ENCODE measurements at regions of chr11 and their contacts with region 1.

Region 1: DNA sequence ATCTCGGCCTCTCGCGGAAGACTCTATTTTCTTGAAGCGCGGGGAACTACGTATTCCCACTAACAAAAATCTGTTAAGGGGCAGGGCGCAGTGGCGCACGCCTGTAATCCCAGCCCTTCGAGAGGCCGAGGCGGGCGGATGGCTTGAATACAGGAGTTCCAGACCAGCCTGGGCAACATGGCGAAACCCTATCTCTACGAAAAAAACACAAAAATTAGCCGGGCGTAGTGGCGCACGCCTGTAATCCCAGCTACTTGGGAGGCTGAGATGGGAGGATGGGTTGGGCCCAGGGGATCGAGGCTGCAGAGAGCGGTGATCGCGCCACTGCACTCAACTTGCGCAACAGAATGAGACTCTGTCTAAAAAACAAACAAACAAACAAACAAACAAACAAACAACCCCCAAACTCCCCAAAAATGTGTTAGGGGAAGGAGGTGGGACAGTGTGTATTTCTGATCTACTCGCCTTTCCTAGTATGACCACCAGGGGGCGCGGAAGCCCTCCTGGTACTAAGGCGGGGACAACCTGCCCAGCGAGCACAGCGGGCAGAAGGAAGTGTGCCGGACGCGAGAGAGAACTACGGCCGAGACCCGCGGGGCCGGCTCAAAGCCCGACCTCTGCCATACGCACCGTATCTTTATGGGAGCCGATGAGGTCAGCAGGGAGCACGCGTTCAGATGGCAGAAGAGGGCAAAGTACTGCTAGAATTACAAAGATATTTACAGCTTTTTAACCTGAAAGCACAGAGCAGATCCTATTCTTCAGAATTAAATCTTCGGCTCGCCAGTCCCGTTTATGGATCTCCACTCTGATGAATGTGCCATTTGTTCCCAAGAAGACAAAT is 1.3 kb upstream of the STX3 start:
- DNase-seq: peak; percentile 65 to 84 (median 75)
- ATAC-seq: peak; percentile 80
- H3K4me3 ChIP-seq: peak overlapping the region; percentile 91
- H3K4me3 Mint-ChIP-seq: peak overlapping the region; percentile 90 to 98 (median 95)
- H3K27ac ChIP-seq: peak overlapping the region; percentile 61
- H3K27ac Mint-ChIP-seq: peak overlapping the region; percentile 32 to 88 (median 71)
- H3K4me1 ChIP-seq: peaks cover 8 to 12% of the 10 kb centered on the region in 2 donors
- H3K4me1 Mint-ChIP-seq: peaks cover 11 to 35% (median 23%) of the 10 kb centered on the region in 7 donors
- H3K27me3 ChIP-seq: no peaks in the 10 kb centered on the region
- H3K27me3 Mint-ChIP-seq: peaks cover 6 to 15% (median 10%) of the 10 kb centered on the region in 5 donors

Region 2: GRCh38 chr11:59534676-59535075 is 219.2 kb before region 1 on chr11:
- CTCF ChIA-PET with region 1: no interaction called
- POLR2A ChIA-PET with region 1: no interaction called
- intact Hi-C with region 1: loop called (anchors 1 to 5 kb)
- DNase-seq: no peak
- ATAC-seq: no peak
- H3K4me3 ChIP-seq: no peak overlapping the region
- H3K4me3 Mint-ChIP-seq: no peak overlapping the region
- H3K27ac ChIP-seq: no peak overlapping the region
- H3K27ac Mint-ChIP-seq: no peak overlapping the region
- H3K4me1 ChIP-seq: no peaks in the 10 kb centered on the region
- H3K4me1 Mint-ChIP-seq: peaks cover 9 to 14% (median 12%) of the 10 kb centered on the region in 7 donors
- H3K27me3 ChIP-seq: no peaks in the 10 kb centered on the region
- H3K27me3 Mint-ChIP-seq: peaks cover 0 to 9% (median 0%) of the 10 kb centered on the region in 5 donors

Region 3: DNA sequence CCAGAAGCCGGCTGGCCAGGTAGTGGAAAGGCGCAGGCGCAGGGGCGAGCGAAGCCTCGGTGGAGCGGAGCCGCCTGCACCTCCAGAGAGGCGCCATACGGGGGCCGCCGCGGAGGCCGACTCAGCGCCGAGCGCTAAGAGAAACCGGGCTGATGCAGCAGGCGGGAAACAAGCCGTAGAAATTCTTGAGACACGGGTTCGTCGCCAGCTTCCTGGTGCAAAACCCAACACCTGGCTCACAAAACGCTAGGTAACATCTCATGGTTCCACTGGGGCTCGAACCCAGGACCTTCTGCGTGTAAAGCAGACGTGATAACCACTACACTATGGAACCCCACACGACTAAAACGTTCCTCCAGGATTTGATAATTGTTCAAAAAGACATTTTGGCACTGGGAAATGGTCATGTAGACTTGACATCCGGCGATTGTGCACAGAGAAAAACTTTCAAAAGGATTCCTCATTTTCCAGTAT is 203.5 kb before region 1 on chr11:
- CTCF ChIA-PET with region 1: no interaction called
- POLR2A ChIA-PET with region 1: no interaction called
- intact Hi-C with region 1: loop called (anchors 1 to 2 kb)
- DNase-seq: peak; percentile 67 to 95 (median 89)
- ATAC-seq: peak; percentile 92
- H3K4me3 ChIP-seq: peak overlapping the region; percentile 59
- H3K4me3 Mint-ChIP-seq: peak overlapping the region; percentile 70 to 98 (median 92)
- H3K27ac ChIP-seq: peak overlapping the region; percentile 66
- H3K27ac Mint-ChIP-seq: peak overlapping the region; percentile 89 to 100 (median 98)
- H3K4me1 ChIP-seq: peaks cover under 1 to 4% of the 10 kb centered on the region in 2 donors
- H3K4me1 Mint-ChIP-seq: peaks cover 0 to 40% (median 32%) of the 10 kb centered on the region in 7 donors
- H3K27me3 ChIP-seq: no peaks in the 10 kb centered on the region
- H3K27me3 Mint-ChIP-seq: peaks cover 0 to 28% (median 0%) of the 10 kb centered on the region in 5 donors

Region 4: GRCh38 chr11:59767225-59767611 is 13.3 kb after region 1 on chr11:
- CTCF ChIA-PET with region 1: interaction called, 24 read pairs
- POLR2A ChIA-PET with region 1: interaction called, 11 read pairs
- intact Hi-C with region 1: loop called (anchors 1 kb)
- DNase-seq: peak in 6 of 9 donors; percentile 10 to 55 (median 40)
- ATAC-seq: peak; percentile 80
- H3K4me3 ChIP-seq: peak overlapping the region; percentile 32
- H3K4me3 Mint-ChIP-seq: peak overlapping the region in 5 of 10 donors; percentile 27 to 67 (median 58)
- H3K27ac ChIP-seq: no peak overlapping the region
- H3K27ac Mint-ChIP-seq: peak overlapping the region in 3 of 9 donors; percentile 24 to 81 (median 49)
- H3K4me1 ChIP-seq: peaks cover 31 to 45% of the 10 kb centered on the region in 2 donors
- H3K4me1 Mint-ChIP-seq: peaks cover 7 to 33% (median 27%) of the 10 kb centered on the region in 7 donors
- H3K27me3 ChIP-seq: no peaks in the 10 kb centered on the region
- H3K27me3 Mint-ChIP-seq: peaks cover 0 to 4% (median 0%) of the 10 kb centered on the region in 5 donors

Region 5: DNA sequence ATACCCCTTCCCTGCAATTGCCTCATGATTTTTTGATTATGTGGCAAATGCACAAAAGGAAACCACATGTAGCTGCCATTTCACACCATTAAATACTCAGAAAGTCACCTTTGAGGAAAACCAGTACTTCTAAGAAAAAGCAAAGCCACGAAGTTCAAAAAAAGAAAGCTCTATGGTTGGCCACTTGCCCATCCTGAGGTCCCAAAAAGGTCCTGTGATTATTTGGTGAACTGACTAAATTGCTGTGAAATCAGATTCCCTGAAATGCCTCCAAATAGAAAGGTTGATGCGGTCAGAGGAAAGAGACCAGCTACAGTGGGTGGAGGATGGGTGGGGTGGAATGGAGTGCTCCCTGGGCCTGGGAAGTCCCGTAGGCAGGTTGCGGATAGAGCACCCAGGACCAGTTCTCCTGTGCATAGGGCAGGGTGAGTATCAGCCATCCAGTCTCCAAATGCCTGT is 29.8 kb after region 1 on chr11:
- CTCF ChIA-PET with region 1: no interaction called
- POLR2A ChIA-PET with region 1: no interaction called
- intact Hi-C with region 1: no loop called
- DNase-seq: no peak
- ATAC-seq: no peak
- H3K4me3 ChIP-seq: no peak overlapping the region
- H3K4me3 Mint-ChIP-seq: peak overlapping the region in 1 of 10 donors; percentile 18
- H3K27ac ChIP-seq: no peak overlapping the region
- H3K27ac Mint-ChIP-seq: peak overlapping the region in 1 of 9 donors; percentile 69
- H3K4me1 ChIP-seq: peaks cover 0 to 14% of the 10 kb centered on the region in 2 donors
- H3K4me1 Mint-ChIP-seq: peaks cover 0 to 69% (median 5%) of the 10 kb centered on the region in 7 donors
- H3K27me3 ChIP-seq: no peaks in the 10 kb centered on the region
- H3K27me3 Mint-ChIP-seq: no peaks in the 10 kb centered on the region

Region 6: GRCh38 chr11:59810189-59810910 is 56.5 kb after region 1 on chr11 and contains the start of gene MRPL16:
- CTCF ChIA-PET with region 1: interaction called, 16 read pairs
- POLR2A ChIA-PET with region 1: interaction called, 24 read pairs
- intact Hi-C with region 1: loop called (anchors 1 to 2 kb)
- DNase-seq: peak; percentile 74 to 89 (median 83)
- ATAC-seq: peak; percentile 100
- H3K4me3 ChIP-seq: peak within 1 kb of the TSS; percentile 83
- H3K4me3 Mint-ChIP-seq: peak within 1 kb of the TSS; percentile 88 to 95 (median 92)
- H3K27ac ChIP-seq: peak within 1 kb of the TSS; percentile 75
- H3K27ac Mint-ChIP-seq: peak within 1 kb of the TSS; percentile 86 to 94 (median 92)
- H3K4me1 ChIP-seq: peaks cover 4 to 9% of the 10 kb centered on the region in 2 donors
- H3K4me1 Mint-ChIP-seq: peaks cover 6 to 35% (median 29%) of the 10 kb centered on the region in 7 donors
- H3K27me3 ChIP-seq: no peaks in the 10 kb centered on the region
- H3K27me3 Mint-ChIP-seq: peaks cover 0 to 7% (median 0%) of the 10 kb centered on the region in 5 donors
- total RNA-seq, gene MRPL16: 25.1 to 65.6 (median 35.2) TPM

Measured in naive thymus-derived CD4-positive, alpha-beta T cell (primary cell).